Activated B cell treated with CpG ODN at 0.5 μM for 24 hours (primary cell): ENCODE measurements at regions of chr15 and their contacts with region 1.

Region 1: DNA sequence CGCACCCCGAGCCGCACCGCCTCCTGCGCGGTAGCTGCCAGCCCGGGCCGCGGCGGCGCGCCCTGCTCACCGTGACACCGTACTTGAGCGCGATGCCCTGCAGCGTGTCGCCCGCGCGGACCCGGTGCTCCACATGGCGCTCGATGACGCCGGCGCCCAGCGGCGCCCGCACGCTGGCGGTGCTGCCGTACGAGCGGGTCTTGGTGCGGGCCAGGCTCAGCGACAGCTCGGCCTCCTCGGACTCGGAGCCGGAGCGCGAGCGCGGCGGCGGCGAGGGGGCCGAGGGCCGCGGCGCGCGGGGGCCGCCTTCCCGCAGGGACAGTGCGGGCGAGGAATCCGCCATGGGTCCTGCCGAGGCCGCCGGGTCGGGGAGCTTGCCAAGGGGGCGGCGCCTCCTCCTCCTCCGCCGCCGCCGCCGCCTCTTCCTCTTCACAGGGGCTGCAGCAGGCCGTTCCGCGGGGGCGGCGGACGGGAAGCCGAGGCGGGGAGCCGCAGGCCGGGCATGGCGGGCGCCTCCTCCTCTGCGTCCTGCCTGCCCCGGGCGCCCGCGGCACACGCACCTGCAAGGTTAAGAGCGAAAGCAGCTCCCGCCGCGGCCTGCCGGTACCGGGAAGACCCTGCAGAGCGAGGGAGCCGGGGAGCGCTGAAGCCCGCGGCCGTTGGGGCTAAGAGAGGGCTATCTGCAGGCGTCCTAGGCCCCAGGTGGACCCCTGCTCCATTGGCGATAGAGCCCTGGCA is at the start of gene LYSMD2:
- DNase-seq: peak; percentile 75
- ATAC-seq: peak; percentile 49
- H3K4me3 Mint-ChIP-seq: peak within 1 kb of the TSS; percentile 90
- H3K27ac Mint-ChIP-seq: peak within 1 kb of the TSS; percentile 93
- H3K4me1 Mint-ChIP-seq: peaks cover 52% of the 10 kb centered on the region
- H3K27me3 Mint-ChIP-seq: no peaks in the 10 kb centered on the region
- CTCF ChIP-seq: no peak
- total RNA-seq, gene LYSMD2: 41.8 and 48.6 TPM in 2 replicates

Region 2: GRCh38 chr15:51380999-51381795 is 356.3 kb before region 1 on chr15:
- CTCF ChIA-PET with region 1: no interaction called
- POLR2A ChIA-PET with region 1: no interaction called
- intact Hi-C with region 1: no loop called
- DNase-seq: no peak
- ATAC-seq: peak; percentile 81
- H3K4me3 Mint-ChIP-seq: no peak overlapping the region
- H3K27ac Mint-ChIP-seq: no peak overlapping the region
- H3K4me1 Mint-ChIP-seq: no peaks in the 10 kb centered on the region
- H3K27me3 Mint-ChIP-seq: peaks cover 9% of the 10 kb centered on the region
- CTCF ChIP-seq: no peak

Region 3: DNA sequence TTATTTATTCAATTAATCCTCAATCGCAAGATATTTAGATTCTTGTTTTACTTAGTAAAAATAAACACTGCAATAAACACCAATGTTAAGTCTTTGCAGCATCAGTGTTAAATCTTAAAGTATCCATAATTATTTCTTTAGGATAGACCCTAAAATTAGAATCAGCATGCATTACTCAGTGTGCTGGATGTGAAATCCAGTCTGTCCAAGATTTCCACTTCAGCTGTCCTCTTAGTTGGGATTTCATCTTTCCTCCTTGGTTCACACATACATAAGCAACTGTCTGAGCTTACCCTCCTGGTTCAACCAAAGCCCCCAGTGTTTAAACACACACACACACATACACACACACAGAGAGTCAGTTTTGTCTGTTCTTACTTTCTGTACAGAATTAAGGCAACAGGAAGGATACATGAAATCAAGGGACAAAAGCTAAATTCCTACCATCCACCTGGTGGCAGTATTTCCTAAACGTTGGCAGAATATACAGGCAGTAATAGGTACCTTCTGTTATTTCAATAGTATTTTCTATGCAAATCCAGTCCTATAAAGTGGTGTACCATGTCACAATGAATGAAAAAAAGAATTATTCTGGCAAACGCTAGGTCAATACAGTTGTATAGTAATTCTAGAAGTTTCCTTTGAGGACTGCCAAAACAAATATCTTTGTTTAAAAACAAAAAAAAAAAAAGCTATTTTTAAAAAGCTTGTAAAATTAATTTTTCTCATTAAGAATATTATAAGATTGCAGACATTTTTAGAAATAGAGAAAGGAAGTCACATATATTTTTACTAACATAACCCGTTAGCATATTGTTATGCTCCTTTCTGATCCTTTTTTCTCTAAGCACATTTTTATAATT is 87.6 kb before region 1 on chr15:
- CTCF ChIA-PET with region 1: interaction called, 35 read pairs
- POLR2A ChIA-PET with region 1: interaction called, 18 read pairs
- intact Hi-C with region 1: loop called (anchors 1 kb)
- DNase-seq: no peak
- ATAC-seq: peak; percentile 84
- H3K4me3 Mint-ChIP-seq: no peak overlapping the region
- H3K27ac Mint-ChIP-seq: no peak overlapping the region
- H3K4me1 Mint-ChIP-seq: no peaks in the 10 kb centered on the region
- H3K27me3 Mint-ChIP-seq: no peaks in the 10 kb centered on the region
- CTCF ChIP-seq: no peak

Region 4: GRCh38 chr15:51750792-51751685 is 13.6 kb after region 1 on chr15 and contains the start of gene TMOD2:
- CTCF ChIA-PET with region 1: interaction called, 10 read pairs
- POLR2A ChIA-PET with region 1: interaction called, 98 read pairs
- intact Hi-C with region 1: loop called (anchors 1 kb)
- DNase-seq: peak; percentile 62
- ATAC-seq: peak; percentile 83
- H3K4me3 Mint-ChIP-seq: peak within 1 kb of the TSS; percentile 96
- H3K27ac Mint-ChIP-seq: peak within 1 kb of the TSS; percentile 86
- H3K4me1 Mint-ChIP-seq: peaks cover 37% of the 10 kb centered on the region
- H3K27me3 Mint-ChIP-seq: no peaks in the 10 kb centered on the region
- CTCF ChIP-seq: no peak
- total RNA-seq, gene TMOD2: 11.3 and 14.6 TPM in 2 replicates

Region 5: DNA sequence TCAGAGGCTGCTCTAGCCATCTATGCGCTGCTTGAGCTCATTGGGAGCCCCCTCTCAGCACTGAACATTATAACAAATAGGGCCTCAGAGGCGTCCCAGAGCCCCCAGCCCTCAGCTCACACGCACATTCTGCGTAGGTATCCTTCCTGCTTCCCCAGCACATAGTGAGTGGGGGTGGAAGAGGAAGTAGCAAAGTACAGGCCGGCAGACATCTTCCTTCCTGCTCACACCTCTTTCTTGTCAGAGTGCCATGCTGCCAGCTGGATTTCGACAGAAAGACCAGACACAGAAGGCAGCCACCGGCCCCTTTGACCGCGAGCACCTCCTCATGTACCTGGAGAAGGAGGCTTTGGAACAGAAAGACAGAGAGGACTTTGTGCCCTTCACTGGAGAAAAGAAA is 30.6 kb after region 1 on chr15:
- CTCF ChIA-PET with region 1: no interaction called
- POLR2A ChIA-PET with region 1: interaction called, 11 read pairs
- intact Hi-C with region 1: no loop called
- DNase-seq: no peak
- ATAC-seq: peak; percentile 58
- H3K4me3 Mint-ChIP-seq: no peak overlapping the region
- H3K27ac Mint-ChIP-seq: peak overlapping the region; percentile 77
- H3K4me1 Mint-ChIP-seq: peaks cover 10% of the 10 kb centered on the region
- H3K27me3 Mint-ChIP-seq: no peaks in the 10 kb centered on the region
- CTCF ChIP-seq: no peak

Region 6: DNA sequence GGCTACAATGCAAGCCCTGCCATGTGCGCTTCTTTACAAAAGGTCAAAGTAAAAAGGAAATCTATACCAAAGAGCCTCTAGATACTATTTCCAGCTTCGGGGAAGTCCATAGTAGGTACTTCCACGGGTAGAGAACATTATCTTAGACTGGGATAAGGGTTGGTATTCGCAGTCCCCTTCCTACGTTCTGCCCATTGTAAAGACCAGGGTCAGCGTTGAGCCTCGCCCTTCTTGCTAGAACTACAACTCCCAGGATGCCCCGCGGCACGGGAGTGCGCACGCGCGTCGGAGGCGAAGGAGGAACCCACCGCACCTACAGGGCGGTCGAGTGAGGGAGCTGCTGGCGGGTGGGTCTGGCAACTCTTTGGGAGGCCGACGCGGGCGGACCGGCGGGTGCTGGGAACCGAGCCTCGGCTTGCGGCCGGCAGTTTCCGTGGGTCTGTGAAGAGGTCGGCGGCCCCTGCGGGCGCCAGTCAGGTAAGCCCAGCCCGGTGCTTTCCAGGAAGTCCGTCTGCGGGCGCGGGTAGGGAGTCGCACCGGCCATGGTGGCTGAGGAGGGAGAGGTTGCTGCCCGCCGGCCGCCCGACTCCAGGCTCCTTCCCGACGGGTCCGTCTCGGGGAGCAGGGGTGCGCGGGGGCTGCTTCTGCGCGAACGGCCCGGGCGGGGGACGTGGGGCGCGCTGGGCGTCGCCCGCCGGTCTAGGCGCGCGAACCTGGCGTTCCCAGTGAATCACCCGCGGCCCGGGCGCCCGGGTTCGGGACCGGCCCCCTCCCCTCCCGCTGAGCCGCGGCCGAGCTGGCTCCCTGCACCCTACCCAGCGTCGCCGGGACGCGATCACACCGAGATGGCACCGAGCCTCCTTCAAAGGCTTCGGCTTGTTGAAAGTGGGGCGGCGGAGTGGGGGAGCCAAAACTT is 92.2 kb after region 1 on chr15 and contains the start of gene TMOD3:
- CTCF ChIA-PET with region 1: no interaction called
- POLR2A ChIA-PET with region 1: interaction called, 6 read pairs
- intact Hi-C with region 1: loop called (anchors 5 kb)
- DNase-seq: peak; percentile 94
- ATAC-seq: peak; percentile 93
- H3K4me3 Mint-ChIP-seq: peak within 1 kb of the TSS; percentile 96
- H3K27ac Mint-ChIP-seq: peak within 1 kb of the TSS; percentile 87
- H3K4me1 Mint-ChIP-seq: peaks cover 41% of the 10 kb centered on the region
- H3K27me3 Mint-ChIP-seq: no peaks in the 10 kb centered on the region
- CTCF ChIP-seq: no peak
- total RNA-seq, gene TMOD3: 39.0 and 47.0 TPM in 2 replicates

Region 7: DNA sequence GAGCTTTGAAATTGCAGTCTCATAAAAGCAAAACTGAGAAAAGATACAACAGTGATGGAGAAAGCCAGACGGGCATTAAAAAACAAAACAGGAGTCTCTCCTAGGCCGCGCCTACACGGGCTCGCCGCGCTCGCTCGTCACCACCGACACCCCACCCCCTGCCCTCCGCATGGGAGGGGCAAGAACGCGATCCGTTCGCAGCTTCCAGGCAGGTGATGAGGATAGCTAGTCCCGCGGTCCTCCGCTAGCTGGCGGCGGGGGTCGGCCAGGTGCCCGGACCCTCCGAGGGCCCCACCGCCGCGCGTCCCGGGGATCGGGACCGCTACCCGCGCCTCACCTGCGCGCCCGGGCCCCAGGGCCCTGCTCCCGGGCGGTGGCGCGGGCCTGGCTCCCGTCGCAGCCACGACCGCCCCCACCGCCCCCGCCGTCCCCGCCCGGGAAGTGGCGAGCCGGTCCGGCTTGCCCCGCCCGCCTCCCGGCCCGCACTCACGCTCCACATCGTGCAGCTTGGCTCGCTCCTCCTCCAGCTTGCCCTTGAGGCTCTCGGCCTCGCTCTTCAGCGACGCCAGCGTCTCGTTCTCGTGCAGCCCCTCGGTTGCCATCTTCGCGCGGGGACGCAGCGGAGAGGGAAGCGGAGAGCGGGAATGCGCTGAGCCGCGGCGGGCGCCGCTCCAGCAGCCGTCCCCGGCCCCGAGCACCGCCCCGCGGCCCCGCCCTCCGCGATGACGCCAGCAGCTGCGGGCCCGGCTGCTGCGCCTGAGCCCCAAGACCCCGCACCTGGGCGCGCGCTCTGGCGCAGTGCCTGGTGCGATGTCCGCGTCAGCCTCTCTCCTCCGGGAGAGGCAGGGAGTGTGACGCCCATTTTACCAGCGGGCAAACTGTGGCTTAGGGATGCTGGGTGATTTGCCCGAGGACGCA is 442.1 kb after region 1 on chr15:
- CTCF ChIA-PET with region 1: no interaction called
- POLR2A ChIA-PET with region 1: interaction called, 6 read pairs
- intact Hi-C with region 1: loop called (anchors 5 kb)
- DNase-seq: peak; percentile 95
- ATAC-seq: peak; percentile 80
- H3K4me3 Mint-ChIP-seq: peak overlapping the region; percentile 98
- H3K27ac Mint-ChIP-seq: peak overlapping the region; percentile 99
- H3K4me1 Mint-ChIP-seq: peaks cover 58% of the 10 kb centered on the region
- H3K27me3 Mint-ChIP-seq: no peaks in the 10 kb centered on the region
- CTCF ChIP-seq: no peak